ENCODE measurements at regions of chr17 and their contacts with region 1.

Region 1: DNA sequence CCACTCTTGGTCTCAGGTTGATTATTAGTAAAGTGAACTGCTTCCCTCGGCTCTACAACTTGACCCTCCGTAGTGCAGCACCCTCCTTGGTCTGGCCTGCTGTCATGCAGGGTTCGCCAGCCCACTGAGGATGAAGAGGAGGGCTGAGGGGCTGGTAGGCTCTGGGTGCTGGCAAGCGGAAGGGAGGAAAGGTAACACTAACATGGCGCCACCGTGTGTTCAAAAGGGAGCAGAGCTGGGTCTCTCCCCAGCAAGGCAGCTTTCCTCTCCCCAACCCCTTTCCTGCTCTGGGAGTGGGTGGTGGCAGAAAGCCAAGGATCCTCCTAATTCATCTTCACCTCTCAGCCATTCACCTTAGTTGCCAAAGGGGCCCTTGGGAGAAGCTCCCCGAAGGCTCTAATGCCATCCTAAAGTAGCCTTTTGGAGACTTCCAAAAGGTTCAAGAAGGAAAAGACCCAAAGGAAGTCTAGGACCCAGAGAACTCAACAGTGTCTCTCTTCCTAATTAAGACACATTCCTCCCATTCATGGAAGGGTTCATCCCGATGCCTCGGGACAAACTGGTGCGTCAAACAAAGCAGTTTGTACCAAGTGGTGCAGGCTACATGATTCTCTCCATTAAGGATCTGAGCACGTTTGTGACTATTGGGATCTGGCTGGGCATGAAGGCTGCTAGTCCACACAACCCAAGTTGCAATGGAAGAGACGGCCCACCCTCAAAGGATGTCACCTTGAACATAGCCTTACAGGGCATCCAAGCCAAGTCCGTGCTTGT is 90.8 kb upstream of the TOB1 start:
- DNase-seq: peak; percentile 52 to 84 (median 62)
- ATAC-seq: peak; percentile 98
- H3K4me3 ChIP-seq: no peak overlapping the region
- H3K4me3 Mint-ChIP-seq: no peak overlapping the region
- H3K27ac ChIP-seq: no peak overlapping the region
- H3K27ac Mint-ChIP-seq: peak overlapping the region; percentile 28
- H3K4me1 ChIP-seq: peaks cover 9% of the 10 kb centered on the region
- H3K4me1 Mint-ChIP-seq: peaks cover 8% of the 10 kb centered on the region
- H3K27me3 ChIP-seq: no peaks in the 10 kb centered on the region
- H3K27me3 Mint-ChIP-seq: no peaks in the 10 kb centered on the region
- CTCF ChIP-seq: peak; percentile 86

Region 2: GRCh38 chr17:50783193-50783660 is 173.7 kb before region 1 on chr17:
- CTCF ChIA-PET with region 1: interaction called, 6 read pairs
- POLR2A ChIA-PET with region 1: no interaction called
- intact Hi-C with region 1: loop called (anchors 1 kb)
- DNase-seq: peak; percentile 64 to 87 (median 73)
- ATAC-seq: peak; percentile 65
- H3K4me3 ChIP-seq: no peak overlapping the region
- H3K4me3 Mint-ChIP-seq: peak overlapping the region; percentile 48
- H3K27ac ChIP-seq: no peak overlapping the region
- H3K27ac Mint-ChIP-seq: no peak overlapping the region
- H3K4me1 ChIP-seq: peaks cover 36% of the 10 kb centered on the region
- H3K4me1 Mint-ChIP-seq: peaks cover 35% of the 10 kb centered on the region
- H3K27me3 ChIP-seq: no peaks in the 10 kb centered on the region
- H3K27me3 Mint-ChIP-seq: peaks cover 5% of the 10 kb centered on the region
- CTCF ChIP-seq: peak; percentile 95

Region 3: DNA sequence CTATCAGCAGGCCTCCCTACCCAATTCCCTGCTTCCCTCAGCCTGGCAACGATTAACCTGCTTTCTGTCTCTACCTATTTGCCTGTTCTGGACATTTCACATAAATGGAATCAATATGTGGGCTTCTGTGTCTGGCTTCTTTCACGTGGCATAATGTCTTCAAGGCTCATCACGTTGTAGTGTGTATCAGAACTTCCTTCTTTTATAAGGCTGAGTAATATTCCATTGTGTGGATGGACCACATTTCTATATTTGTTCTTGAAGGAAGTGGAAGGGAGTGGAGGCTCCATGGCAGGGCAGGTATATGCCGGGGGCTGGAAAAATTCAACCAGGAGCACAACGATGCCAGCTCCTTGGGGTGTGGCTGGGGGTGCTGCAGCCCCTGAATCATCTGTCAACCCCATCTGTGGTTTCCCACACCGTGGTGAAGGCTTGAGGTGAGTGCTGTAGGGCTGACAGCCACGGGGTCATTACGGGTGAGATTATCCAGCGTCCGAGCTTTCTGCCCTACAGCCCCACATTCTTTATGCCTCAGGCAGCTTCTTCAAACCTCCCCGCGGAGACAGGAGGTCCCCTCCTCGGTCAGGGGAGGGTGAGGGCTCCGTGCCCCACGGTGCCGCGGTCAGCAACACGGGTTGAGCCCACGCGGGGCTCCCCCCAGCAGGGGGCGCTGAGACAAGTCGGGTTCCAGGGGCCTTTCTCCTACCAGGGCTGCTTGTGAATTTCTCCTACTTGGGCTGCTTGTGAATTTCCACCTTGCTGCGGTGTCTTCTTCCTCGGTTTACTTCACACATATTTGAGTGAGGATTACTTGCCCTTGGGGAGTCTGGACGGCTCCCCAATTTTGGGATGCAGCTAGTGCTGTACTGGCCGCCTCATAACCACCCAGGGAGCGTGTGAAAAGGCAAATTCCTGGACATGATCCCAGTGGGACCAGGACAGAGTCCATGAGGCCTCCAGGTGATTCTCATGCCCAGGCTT is 139.9 kb before region 1 on chr17:
- CTCF ChIA-PET with region 1: no interaction called
- POLR2A ChIA-PET with region 1: no interaction called
- intact Hi-C with region 1: loop called in 1 of 2 experiments (anchors 1 kb)
- DNase-seq: peak; percentile 30 to 77 (median 53)
- ATAC-seq: peak; percentile 66
- H3K4me3 ChIP-seq: no peak overlapping the region
- H3K4me3 Mint-ChIP-seq: no peak overlapping the region
- H3K27ac ChIP-seq: no peak overlapping the region
- H3K27ac Mint-ChIP-seq: no peak overlapping the region
- H3K4me1 ChIP-seq: peaks cover 8% of the 10 kb centered on the region
- H3K4me1 Mint-ChIP-seq: no peaks in the 10 kb centered on the region
- H3K27me3 ChIP-seq: peaks cover 4 to 6% of the 10 kb centered on the region in 2 experiments
- H3K27me3 Mint-ChIP-seq: peaks cover 25% of the 10 kb centered on the region
- CTCF ChIP-seq: peak; percentile 85

Measured in CD4-positive, alpha-beta T cell (primary cell).